ENCODE measurements at regions of chr16 and their contacts with region 1.

Region 1: DNA sequence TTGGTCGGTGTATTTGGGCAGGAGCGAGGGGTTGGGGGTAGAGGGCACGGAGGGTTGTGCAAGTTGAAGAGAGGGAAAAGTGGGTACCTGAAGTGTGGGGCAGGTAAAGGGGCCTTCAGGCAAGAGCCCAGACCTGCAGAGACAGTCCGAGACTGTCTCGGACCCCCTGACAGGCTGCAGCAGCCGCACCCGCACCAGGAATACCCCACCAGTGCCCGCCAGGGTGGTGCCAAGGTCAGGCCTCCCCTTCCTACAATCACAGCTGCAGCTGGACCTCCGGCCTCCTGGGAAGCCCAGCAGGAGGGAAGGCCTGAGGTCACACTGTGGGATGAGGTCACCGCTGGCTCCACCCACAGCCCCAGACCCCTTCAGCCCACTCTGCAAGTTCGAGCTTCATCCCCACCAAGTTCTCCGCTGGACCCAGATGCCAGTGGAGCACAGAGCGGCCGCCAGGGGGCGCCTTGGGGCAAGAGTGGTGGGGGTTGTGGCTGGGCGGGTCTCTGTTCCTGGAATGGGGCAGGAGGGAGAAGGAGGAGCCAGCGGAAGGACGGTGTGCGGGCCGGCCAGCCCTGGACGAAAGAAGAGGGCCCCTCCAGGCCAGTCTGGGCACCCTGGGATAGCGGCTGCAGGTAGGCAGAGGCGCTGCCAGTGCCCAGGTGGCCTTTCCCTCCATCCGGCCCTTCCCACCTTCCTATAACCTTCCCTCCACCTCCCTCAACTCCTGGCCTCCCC is at the start of gene HSD3B7:
- DNase-seq: peak; percentile 91 to 95 (median 94)
- ATAC-seq: peak; percentile 96
- H3K4me3 ChIP-seq: no peak within 1 kb of the TSS
- H3K4me1 ChIP-seq: peaks cover 4% of the 10 kb centered on the region
- CTCF ChIP-seq: peak; percentile 91
- total RNA-seq, gene HSD3B7: 16.5 to 27.7 (median 23.2) TPM

Region 2: GRCh38 chr16:31032736-31033708 is 48.2 kb after region 1 on chr16 and contains the start of gene STX4:
- intact Hi-C with region 1: loop called in 1 of 2 experiments (anchors 10 kb)
- DNase-seq: peak; percentile 98 to 99 (median 99)
- ATAC-seq: peak; percentile 95
- H3K4me3 ChIP-seq: peak within 1 kb of the TSS; percentile 79
- H3K4me1 ChIP-seq: peaks cover 12% of the 10 kb centered on the region
- CTCF ChIP-seq: no peak
- total RNA-seq, gene STX4: 74.8 to 87.7 (median 86.9) TPM

Region 3: DNA sequence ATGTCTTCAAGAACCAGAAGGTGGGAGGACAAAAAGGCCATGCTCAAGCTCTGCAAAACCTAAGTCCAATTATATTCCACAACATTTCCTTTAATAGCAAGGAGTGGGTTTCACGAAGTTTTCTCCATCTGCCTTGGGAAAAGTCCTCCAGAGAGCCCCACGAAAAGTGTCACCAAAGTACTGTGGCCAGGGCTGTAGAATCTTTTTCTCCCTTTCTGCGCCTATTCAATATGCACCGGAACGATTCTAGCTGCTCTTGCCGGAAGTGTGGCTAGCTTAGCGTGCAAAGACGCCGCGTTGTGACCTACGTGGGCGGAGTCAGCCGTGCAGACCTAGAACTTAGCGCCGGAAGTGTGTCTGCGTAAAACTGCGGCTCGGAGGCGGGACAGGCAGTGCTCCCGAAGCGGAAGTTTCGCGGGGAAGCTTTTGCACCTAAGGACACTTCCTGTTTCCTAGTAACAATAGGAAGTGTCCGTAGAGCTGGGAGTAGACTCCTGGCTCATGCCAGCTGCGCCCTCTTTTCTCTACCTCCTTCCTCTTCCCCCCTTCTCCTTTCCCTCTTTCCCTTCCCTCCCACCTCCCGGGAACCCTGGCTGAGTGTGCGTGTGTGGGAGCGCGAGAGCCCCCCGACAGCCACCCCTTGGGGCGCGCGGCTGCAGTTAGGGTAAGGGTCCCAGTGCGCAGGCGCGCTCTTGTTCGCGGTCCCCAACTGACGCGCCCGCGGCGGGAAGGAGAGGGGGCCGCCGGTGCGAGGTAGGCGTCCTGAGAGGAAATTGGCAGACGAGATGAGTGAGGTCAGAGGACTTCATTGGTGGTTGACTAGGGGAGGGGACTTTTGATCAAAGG is 89.4 kb after region 1 on chr16 and contains the starts of genes ZNF646 and ZNF668:
- intact Hi-C with region 1: loop called in 1 of 2 experiments (anchors 10 kb)
- DNase-seq: peak; percentile 97 to 99 (median 99)
- ATAC-seq: peak; percentile 91
- H3K4me3 ChIP-seq: peak within 1 kb of the TSS; percentile 86
- H3K4me1 ChIP-seq: peaks cover 17% of the 10 kb centered on the region
- CTCF ChIP-seq: no peak
- total RNA-seq, gene ZNF646: 19.1 to 20.3 (median 20.0) TPM
- total RNA-seq, gene ZNF668: 8.3 to 10.2 (median 9.8) TPM

Region 4: DNA sequence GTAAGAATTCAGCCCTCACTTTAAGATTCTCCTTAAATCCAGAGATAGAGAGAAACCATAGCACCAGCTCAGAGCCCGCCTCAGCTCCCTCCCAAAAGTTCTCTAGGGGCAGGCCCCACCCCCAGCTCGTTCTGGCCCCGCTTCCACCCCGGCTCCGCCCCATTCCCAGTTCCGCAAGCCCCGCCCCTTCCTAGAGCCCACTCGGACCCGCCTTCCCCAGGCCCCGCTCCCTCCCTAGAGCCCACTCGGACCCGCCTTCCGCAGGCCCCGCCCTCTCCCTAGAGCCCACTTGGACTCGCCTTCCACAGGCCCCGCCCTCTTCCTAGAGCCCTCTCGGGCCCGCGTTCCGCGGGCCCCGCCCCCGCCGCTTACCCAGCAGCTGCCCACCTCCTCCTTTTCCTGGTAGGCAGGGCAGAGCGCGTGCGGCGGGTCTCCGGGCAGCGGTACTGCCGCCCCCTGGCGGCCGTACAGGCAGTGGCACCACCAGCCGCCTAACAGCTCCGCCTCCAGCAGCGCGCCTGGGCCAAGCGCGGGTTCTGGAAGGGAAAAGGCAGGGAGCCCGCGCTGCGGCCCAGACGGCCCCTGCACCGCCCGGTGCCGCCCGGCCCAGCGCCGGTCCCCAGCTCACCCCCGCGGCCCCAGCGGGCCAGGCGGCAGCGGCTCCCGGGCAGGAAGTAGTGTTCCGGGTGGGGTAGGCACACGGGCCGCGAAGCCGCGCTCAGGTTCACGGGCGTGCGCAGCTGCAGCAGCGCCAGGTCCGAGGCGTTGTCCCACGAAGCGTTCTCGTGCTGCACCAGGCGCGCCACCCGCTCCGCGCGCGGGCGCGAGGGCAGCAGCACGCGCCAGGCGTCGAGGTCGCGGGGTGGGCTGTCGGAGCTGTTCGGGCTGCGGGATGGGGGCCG is 157.5 kb after region 1 on chr16:
- intact Hi-C with region 1: loop called in 1 of 2 experiments (anchors 10 kb)
- DNase-seq: peak; percentile 98 to 100 (median 100)
- ATAC-seq: peak; percentile 88
- H3K4me3 ChIP-seq: peak overlapping the region; percentile 11
- H3K4me1 ChIP-seq: peaks cover 29% of the 10 kb centered on the region
- CTCF ChIP-seq: peak; percentile 93

Region 5: DNA sequence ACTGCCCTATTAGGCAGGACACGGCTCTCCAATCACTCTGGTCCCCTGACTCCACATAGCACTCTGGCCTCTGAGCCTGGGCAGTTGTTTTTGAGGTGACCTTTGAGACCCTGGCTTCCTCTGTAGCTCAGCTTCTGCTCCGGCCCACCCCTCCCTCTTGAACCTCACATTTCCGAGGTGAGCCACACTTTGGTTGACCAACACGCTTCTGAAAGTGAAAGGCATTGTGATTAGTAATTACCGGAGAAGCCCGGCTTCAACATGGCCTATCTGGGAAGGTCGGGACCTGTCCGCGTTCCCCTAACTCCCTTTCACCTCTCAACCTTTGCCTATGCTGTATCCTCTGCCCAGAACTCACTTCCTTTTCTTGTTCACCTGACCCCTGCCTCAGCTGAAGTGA is 359.9 kb after region 1 on chr16:
- intact Hi-C with region 1: no loop called
- DNase-seq: no peak
- ATAC-seq: no peak
- H3K4me3 ChIP-seq: no peak overlapping the region
- H3K4me1 ChIP-seq: no peaks in the 10 kb centered on the region
- CTCF ChIP-seq: no peak

Region 6: GRCh38 chr16:31440516-31441184 is 455.8 kb after region 1 on chr16:
- intact Hi-C with region 1: loop called (anchors 5 to 10 kb)
- DNase-seq: peak in 1 of 3 donors; percentile 2
- ATAC-seq: no peak
- H3K4me3 ChIP-seq: no peak overlapping the region
- H3K4me1 ChIP-seq: peaks cover 2% of the 10 kb centered on the region
- CTCF ChIP-seq: no peak

Region 7: DNA sequence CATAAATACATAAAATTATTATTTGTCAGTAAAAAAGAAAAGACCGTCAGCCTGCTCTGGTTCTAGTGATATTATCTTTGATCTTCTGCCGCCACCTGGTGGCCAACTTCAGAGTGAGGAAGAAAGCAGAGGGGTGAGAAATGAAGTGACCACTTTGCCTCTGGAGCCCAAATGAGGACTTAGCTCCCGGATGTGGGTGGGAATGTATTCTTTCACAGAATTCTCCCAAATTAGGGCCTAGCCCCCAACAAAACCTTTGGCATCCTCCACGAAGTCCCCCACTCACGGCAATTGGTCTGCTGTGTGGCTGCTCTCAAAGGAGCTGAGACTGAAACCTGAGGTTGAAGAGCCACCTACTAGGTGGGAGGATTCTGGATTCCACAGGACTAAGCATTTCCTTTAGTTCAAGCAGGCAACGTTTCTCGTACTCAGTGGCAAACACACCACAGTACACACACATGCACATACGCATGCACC is 883.9 kb after region 1 on chr16:
- intact Hi-C with region 1: loop called in 1 of 2 experiments (anchors 10 kb)
- DNase-seq: peak in 2 of 3 donors; percentile 77 to 95
- ATAC-seq: peak; percentile 60
- H3K4me3 ChIP-seq: no peak overlapping the region
- H3K4me1 ChIP-seq: no peaks in the 10 kb centered on the region
- CTCF ChIP-seq: peak; percentile 56